Activated CD4-positive, alpha-beta memory T cell treated with anti-CD3 and anti-CD28 coated beads, Interleukin-2, amount 10 ng/mL, durations not matched to agents 7 days and 5 days (primary cell): ENCODE measurements at regions of chr1 and their contacts with region 1.

Region 1: DNA sequence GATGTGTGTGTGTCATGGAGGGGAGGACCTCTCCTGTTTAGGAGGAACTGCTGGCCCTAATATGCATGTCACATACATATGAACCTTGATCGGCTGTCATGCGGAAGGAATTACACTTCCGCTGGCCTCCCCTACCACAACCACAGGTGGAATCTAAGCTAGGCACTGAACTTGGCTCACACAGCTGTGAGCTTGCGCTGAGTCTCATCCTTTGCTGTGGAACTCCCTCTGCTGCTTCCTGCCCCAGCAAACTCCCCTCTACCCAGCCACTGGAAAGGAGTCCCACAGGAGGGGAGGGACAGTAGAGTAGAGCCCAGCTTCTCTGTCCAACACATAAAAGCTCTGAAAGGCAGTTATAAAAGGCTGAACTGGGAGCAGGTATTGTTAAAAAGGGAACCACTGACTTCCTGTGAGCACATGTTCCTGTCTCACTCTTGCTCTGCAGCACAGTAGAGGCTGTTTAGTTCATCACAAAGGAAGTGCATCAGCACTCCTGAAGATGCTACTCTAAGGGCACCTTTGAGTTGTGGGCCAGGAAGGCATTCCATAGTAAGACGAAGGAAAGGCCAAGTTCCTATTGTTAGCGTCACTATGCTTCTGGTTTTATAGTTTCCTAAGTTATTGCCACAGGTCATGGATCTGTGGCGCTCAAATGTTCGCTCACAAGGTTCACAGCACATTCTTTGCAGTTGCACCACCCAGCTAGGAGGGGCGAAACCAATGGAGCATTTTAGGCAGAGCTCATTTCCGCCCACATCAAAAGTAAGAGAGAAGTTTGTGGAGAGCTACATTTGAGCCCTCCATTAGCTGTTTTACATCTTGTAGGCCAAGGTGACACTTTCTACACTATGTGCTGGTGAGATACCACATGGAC is 17.7 kb upstream of the PTPRC start:
- DNase-seq: peak; percentile 84
- H3K4me3 Mint-ChIP-seq: peak overlapping the region; percentile 82
- H3K27ac Mint-ChIP-seq: peak overlapping the region; percentile 99
- H3K4me1 Mint-ChIP-seq: peaks cover 85% of the 10 kb centered on the region
- H3K27me3 Mint-ChIP-seq: no peaks in the 10 kb centered on the region

Region 2: DNA sequence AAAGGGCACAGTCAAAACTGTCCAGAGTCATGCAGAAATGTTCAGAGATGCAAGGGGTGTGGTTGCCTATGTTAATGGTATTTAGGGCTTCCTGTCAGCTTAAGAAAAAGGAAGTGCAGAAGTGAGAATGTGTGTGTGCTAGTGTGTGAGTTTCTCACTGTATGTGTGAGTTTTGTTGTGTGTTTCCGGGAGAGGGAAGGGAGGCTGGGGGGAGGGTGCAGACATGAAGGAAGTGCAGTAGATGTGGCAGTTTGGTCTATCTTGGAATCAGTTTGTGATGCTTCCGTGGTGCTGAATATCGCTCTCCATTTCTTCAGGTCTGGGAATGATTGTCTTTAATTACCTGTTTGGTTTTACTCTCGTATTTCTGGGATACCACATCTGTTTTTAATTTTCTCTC is 64.2 kb before region 1 on chr1:
- CTCF ChIA-PET with region 1: no interaction called
- POLR2A ChIA-PET with region 1: interaction called, 25 read pairs
- DNase-seq: peak; percentile 76
- H3K4me3 Mint-ChIP-seq: peak overlapping the region; percentile 47
- H3K27ac Mint-ChIP-seq: peak overlapping the region; percentile 87
- H3K4me1 Mint-ChIP-seq: peaks cover 48% of the 10 kb centered on the region
- H3K27me3 Mint-ChIP-seq: no peaks in the 10 kb centered on the region

Region 3: GRCh38 chr1:198606020-198606438 is 15.2 kb before region 1 on chr1:
- CTCF ChIA-PET with region 1: interaction called, 17 read pairs
- POLR2A ChIA-PET with region 1: interaction called, 146 read pairs
- DNase-seq: no peak
- H3K4me3 Mint-ChIP-seq: no peak overlapping the region
- H3K27ac Mint-ChIP-seq: no peak overlapping the region
- H3K4me1 Mint-ChIP-seq: peaks cover 44% of the 10 kb centered on the region
- H3K27me3 Mint-ChIP-seq: no peaks in the 10 kb centered on the region

Region 4: GRCh38 chr1:198651650-198652400 is 30.6 kb after region 1 on chr1:
- CTCF ChIA-PET with region 1: interaction called, 7 read pairs
- POLR2A ChIA-PET with region 1: interaction called, 100 read pairs
- DNase-seq: no peak
- H3K4me3 Mint-ChIP-seq: peak overlapping the region; percentile 65
- H3K27ac Mint-ChIP-seq: peak overlapping the region; percentile 67
- H3K4me1 Mint-ChIP-seq: peaks cover 78% of the 10 kb centered on the region
- H3K27me3 Mint-ChIP-seq: no peaks in the 10 kb centered on the region

Region 5: GRCh38 chr1:198669023-198669698 is 48.0 kb after region 1 on chr1:
- CTCF ChIA-PET with region 1: interaction called, 4 read pairs
- POLR2A ChIA-PET with region 1: interaction called, 86 read pairs
- DNase-seq: peak; percentile 60
- H3K4me3 Mint-ChIP-seq: peak overlapping the region; percentile 41
- H3K27ac Mint-ChIP-seq: peak overlapping the region; percentile 87
- H3K4me1 Mint-ChIP-seq: peaks cover 88% of the 10 kb centered on the region
- H3K27me3 Mint-ChIP-seq: no peaks in the 10 kb centered on the region

Region 6: GRCh38 chr1:198741744-198742143 is 120.6 kb after region 1 on chr1:
- CTCF ChIA-PET with region 1: no interaction called
- POLR2A ChIA-PET with region 1: no interaction called
- DNase-seq: no peak
- H3K4me3 Mint-ChIP-seq: no peak overlapping the region
- H3K27ac Mint-ChIP-seq: no peak overlapping the region
- H3K4me1 Mint-ChIP-seq: peaks cover 49% of the 10 kb centered on the region
- H3K27me3 Mint-ChIP-seq: no peaks in the 10 kb centered on the region